ENCODE measurements at regions of chr11 and their contacts with region 1.

Region 1: DNA sequence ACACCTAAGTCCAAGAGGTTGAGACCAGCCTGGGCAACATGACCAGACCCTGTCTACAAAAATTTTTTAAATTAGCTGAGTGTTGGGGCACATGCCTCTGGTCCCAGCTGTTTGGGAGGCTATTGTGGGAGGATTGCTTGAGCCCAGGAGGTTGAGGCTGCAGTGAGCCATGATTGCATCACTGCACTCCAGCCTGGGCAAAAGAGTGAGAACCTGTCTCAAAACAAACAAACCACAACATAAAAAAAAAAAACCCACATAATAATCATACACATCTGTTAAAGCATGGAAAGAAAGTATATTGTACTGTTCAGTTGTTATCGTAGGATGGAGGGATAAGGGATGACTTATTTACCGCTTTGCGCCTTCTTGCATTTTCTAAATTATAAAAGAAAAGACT is 35.9 kb upstream of the GRK2 start:
- DNase-seq: no peak
- H3K4me3 ChIP-seq: no peak overlapping the region
- H3K27ac ChIP-seq: no peak overlapping the region
- H3K4me1 ChIP-seq: peaks cover 12% of the 10 kb centered on the region
- H3K27me3 ChIP-seq: no peaks in the 10 kb centered on the region
- CTCF ChIP-seq: no peak

Region 2: GRCh38 chr11:67178878-67179277 is 51.5 kb before region 1 on chr11:
- dilution Hi-C with region 1: loop called (anchors 5 kb)
- DNase-seq: no peak
- H3K4me3 ChIP-seq: no peak overlapping the region
- H3K27ac ChIP-seq: no peak overlapping the region
- H3K4me1 ChIP-seq: no peaks in the 10 kb centered on the region
- H3K27me3 ChIP-seq: no peaks in the 10 kb centered on the region
- CTCF ChIP-seq: no peak

Region 3: DNA sequence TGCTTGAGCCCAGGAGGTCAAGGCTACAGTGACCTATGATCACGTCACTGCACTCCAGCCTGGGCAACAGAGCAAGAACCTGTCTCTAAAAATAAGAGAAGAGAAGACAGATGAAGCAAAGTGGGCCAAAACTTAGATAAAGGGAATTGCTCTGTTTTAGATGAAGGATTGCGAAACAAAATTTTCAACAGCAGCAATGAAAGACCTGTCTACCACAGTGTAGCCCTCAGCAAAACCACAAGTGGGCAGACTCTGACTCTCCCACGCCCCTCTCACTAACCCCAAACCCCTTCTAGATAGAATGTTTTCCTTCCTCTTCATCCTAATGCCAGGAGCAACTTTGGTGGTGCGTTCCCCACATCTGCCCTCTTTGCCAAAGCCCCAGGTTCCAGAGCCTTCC is 549.6 kb after region 1 on chr11:
- dilution Hi-C with region 1: no loop called
- DNase-seq: no peak
- H3K4me3 ChIP-seq: no peak overlapping the region
- H3K27ac ChIP-seq: no peak overlapping the region
- H3K4me1 ChIP-seq: no peaks in the 10 kb centered on the region
- H3K27me3 ChIP-seq: no peaks in the 10 kb centered on the region
- CTCF ChIP-seq: no peak

Measured in keratinocyte (primary cell).